ENCODE measurements at regions of chr1 and their contacts with region 1.

Region 1: GRCh38 chr1:71967670-71968069 is 314.7 kb downstream of the NEGR1 start:
- DNase-seq: no peak
- ATAC-seq: no peak
- H3K4me3 ChIP-seq: no peak overlapping the region
- H3K27ac ChIP-seq: no peak overlapping the region
- H3K4me1 ChIP-seq: peaks cover 2% of the 10 kb centered on the region; the same call in 1 of the 2 replicates
- H3K27me3 ChIP-seq: no peaks in the 10 kb centered on the region
- CTCF ChIP-seq: no peak
- POLR2A ChIP-seq: no peak
- RAD21 ChIP-seq: no peak

Region 2: DNA sequence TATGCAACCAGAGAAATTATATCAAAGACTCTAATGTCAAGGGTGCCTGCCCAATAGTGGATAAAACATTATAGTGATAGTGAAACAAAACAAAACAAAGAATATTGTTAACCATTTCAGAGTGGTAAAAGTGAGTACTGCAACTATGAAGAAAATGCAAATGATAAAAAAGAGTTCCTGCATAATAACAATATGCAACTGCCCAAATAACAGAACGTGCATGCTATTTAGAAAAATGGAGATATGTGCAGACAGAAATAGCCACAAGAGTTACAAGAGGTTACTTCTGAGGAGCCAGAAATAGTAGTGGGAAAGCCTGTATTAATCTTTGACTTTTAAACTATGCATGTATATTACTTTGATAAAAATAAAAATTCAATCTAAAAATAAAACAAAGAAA is 12.2 kb after region 1 on chr1:
- CTCF ChIA-PET with region 1: no interaction called
- POLR2A ChIA-PET with region 1: no interaction called
- dilution Hi-C with region 1: no loop called
- in situ Hi-C with region 1: no loop called
- intact Hi-C with region 1: loop called (anchors 1 kb)
- DNase-seq: no peak
- ATAC-seq: no peak
- H3K4me3 ChIP-seq: no peak overlapping the region
- H3K27ac ChIP-seq: no peak overlapping the region
- H3K4me1 ChIP-seq: no peaks in the 10 kb centered on the region
- H3K27me3 ChIP-seq: no peaks in the 10 kb centered on the region
- CTCF ChIP-seq: no peak
- POLR2A ChIP-seq: no peak
- RAD21 ChIP-seq: no peak

Region 3: GRCh38 chr1:72010094-72010431 is 42.4 kb after region 1 on chr1:
- CTCF ChIA-PET with region 1: no interaction called
- POLR2A ChIA-PET with region 1: no interaction called
- dilution Hi-C with region 1: no loop called
- in situ Hi-C with region 1: no loop called
- intact Hi-C with region 1: no loop called
- DNase-seq: no peak
- ATAC-seq: no peak
- H3K4me3 ChIP-seq: no peak overlapping the region
- H3K27ac ChIP-seq: no peak overlapping the region
- H3K4me1 ChIP-seq: peaks cover 3% of the 10 kb centered on the region; the same call in 1 of the 2 replicates
- H3K27me3 ChIP-seq: no peaks in the 10 kb centered on the region
- CTCF ChIP-seq: no peak
- POLR2A ChIP-seq: no peak
- RAD21 ChIP-seq: no peak

Region 4: DNA sequence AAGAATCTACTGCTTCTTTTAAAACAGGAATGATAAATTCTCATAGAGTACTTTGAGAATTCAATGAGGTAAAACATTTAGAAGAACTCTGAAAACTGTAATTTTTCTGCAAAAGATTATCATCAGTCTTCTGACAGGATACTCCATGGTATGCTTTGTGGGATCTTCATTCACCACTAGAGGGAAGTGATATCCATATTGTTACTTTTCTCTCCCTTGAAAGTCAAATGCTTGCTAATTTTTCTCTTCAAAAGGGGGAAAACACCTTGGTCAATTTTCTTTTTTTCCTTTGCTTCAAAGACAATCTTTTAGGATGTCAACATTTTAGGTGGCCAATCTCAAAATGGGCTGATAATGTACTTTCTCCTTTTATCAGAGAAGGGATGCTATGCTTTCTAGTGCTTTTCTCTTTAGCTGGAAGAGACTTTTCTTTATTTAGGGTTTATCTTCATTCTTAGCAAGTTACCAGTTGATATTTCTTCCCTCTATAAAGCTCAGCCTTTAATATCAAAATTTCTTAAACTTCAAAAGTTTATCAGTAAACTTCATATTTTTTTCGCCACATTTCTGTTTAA is 219.2 kb after region 1 on chr1:
- CTCF ChIA-PET with region 1: no interaction called
- POLR2A ChIA-PET with region 1: no interaction called
- dilution Hi-C with region 1: no loop called
- in situ Hi-C with region 1: no loop called
- intact Hi-C with region 1: no loop called
- DNase-seq: peak; percentile 38
- ATAC-seq: peak; percentile 60
- H3K4me3 ChIP-seq: no peak overlapping the region
- H3K27ac ChIP-seq: no peak overlapping the region
- H3K4me1 ChIP-seq: peaks cover 6% of the 10 kb centered on the region
- H3K27me3 ChIP-seq: no peaks in the 10 kb centered on the region
- CTCF ChIP-seq: peak; percentile 63
- POLR2A ChIP-seq: no peak
- RAD21 ChIP-seq: peak; percentile 74

Measured in IMR-90 (cell line).